ENCODE measurements at regions of chr2 and their contacts with region 1.

Region 1: GRCh38 chr2:85826990-85827878 is 61.6 kb downstream of the ST3GAL5 start:
- DNase-seq: peak; percentile 77
- ATAC-seq: peak; percentile 99
- H3K4me3 Mint-ChIP-seq: peak overlapping the region; percentile 66
- H3K27ac Mint-ChIP-seq: peak overlapping the region; percentile 62
- H3K4me1 Mint-ChIP-seq: peaks cover 29% of the 10 kb centered on the region
- H3K27me3 Mint-ChIP-seq: peaks cover 2% of the 10 kb centered on the region
- CTCF ChIP-seq: peak; percentile 32

Region 2: DNA sequence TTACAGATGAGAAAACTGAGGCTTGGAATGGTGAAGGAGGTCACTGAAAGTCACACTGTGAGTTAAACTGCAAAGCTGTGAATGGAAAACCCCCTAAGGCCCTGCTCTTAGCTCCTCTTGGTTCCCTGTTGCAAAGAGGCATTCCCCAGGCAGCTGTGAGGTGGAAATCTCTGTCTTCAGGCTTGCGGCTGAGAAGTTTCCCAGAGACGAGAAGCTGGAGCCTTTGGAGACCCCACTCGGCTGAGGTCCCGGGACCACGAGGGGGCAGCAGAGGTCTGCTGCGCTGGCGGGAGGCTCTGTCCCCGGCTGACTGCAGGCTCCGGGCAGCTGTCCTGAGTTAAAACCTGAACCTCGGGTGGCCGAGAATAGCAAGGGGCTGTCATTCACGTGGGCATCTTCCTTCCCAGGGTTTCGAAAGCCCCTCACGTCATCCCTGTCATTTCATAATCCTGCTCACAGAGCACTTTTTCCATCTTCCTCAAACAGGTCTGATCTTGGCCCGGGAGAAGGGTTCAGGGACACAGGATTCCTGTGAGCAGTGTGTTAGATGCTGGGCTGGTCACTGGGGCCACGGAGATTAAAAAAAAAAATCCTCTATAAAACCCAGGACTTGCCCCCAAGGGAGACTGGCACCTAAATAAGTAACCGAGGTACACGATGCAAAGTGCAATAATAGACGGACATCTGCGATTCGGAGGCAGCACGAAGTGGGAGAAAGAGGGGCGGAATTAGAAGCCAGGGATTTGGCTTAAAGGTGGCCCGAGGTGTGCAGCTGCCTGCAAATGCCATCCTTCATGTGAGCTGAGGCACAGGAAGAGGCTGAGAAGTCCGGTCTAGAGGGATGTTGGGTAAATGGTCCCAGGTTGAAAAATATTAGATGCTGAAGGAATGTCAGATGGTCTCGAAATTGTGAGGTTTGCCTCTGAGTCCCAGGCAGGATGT is 98.1 kb before region 1 on chr2:
- CTCF ChIA-PET with region 1: interaction called, 11 read pairs
- POLR2A ChIA-PET with region 1: interaction called, 3 read pairs
- intact Hi-C with region 1: no loop called
- DNase-seq: peak; percentile 76
- ATAC-seq: peak; percentile 94
- H3K4me3 Mint-ChIP-seq: no peak overlapping the region
- H3K27ac Mint-ChIP-seq: peak overlapping the region; percentile 41
- H3K4me1 Mint-ChIP-seq: peaks cover 2% of the 10 kb centered on the region
- H3K27me3 Mint-ChIP-seq: peaks cover 18% of the 10 kb centered on the region
- CTCF ChIP-seq: peak; percentile 32

Region 3: GRCh38 chr2:85852937-85853498 is 25.8 kb after region 1 on chr2:
- CTCF ChIA-PET with region 1: interaction called, 65 read pairs
- POLR2A ChIA-PET with region 1: interaction called, 8 read pairs
- intact Hi-C with region 1: loop called (anchors 2 kb)
- DNase-seq: peak; percentile 29
- ATAC-seq: peak; percentile 76
- H3K4me3 Mint-ChIP-seq: peak overlapping the region; percentile 79
- H3K27ac Mint-ChIP-seq: peak overlapping the region; percentile 99
- H3K4me1 Mint-ChIP-seq: peaks cover 79% of the 10 kb centered on the region
- H3K27me3 Mint-ChIP-seq: no peaks in the 10 kb centered on the region
- CTCF ChIP-seq: no peak

Region 4: DNA sequence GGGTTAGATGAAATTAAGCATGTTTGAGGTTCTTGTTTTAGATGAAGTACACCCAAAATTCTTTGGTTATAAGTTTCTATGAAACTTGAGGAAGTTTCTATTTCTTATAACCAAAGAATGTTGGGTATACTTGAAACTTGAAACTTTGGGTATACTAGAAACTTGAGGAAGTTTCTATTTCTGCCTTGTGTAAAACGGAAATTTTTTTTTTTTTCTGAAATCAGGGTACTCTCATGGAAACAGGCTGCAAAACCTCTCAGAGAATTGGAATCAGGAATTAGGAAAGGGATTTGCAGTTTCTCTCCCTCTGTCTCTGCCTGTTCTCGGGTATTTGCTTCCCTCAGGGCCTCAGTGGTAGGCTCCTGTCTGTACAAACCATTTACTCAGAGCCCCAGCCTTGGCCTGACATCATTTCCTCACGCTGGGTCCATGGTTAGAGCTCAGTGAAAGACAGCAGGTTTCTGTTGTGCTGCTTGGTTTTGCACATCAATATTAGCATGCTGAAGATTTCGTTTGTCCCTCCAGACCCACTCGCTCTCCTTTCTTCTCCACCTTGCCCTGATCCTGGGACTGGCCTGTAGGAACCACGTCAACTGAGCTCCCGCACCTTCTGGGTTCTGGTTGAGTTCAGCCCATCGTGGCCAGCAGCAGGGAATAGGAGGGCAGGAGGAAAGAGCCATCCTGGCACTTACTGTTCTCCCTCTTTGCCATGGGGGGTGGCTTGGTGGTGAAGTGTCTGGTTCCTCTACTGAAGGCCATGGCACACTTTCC is 172.0 kb after region 1 on chr2:
- CTCF ChIA-PET with region 1: interaction called, 10 read pairs
- POLR2A ChIA-PET with region 1: no interaction called
- intact Hi-C with region 1: no loop called
- DNase-seq: no peak
- ATAC-seq: peak; percentile 73
- H3K4me3 Mint-ChIP-seq: peak overlapping the region; percentile 66
- H3K27ac Mint-ChIP-seq: peak overlapping the region; percentile 96
- H3K4me1 Mint-ChIP-seq: peaks cover 76% of the 10 kb centered on the region
- H3K27me3 Mint-ChIP-seq: no peaks in the 10 kb centered on the region
- CTCF ChIP-seq: no peak

Region 5: DNA sequence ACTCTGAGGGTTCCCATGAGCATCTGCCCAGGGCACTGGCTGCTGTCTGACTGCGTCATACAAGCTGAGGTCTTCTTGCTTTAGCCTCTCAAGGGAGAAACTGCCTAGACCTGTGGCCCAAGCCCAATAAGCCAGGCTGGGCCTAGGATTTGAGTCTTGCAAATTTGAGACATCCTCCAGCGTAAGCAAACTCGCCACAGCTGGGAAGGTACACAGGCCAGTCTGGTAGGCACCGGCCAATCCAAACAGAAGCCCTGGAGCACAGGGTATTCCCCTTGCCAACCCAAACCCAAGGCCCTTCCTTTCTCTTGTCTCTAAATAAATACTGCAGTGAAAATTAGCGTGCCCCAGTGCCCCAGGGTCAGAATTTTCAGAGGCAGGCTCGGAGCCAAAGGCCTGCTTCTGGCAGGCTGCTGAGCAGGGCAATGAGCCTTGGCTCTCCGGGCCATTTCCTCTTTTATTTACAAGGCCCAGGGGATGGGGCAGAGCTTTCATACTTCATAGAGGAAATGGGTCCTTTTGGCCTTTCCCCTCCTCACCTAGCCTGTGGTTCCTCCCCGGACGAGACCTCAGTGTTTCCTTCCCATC is 245.1 kb after region 1 on chr2:
- CTCF ChIA-PET with region 1: interaction called, 236 read pairs
- POLR2A ChIA-PET with region 1: interaction called, 36 read pairs
- intact Hi-C with region 1: no loop called
- DNase-seq: peak; percentile 38
- ATAC-seq: peak; percentile 93
- H3K4me3 Mint-ChIP-seq: peak overlapping the region; percentile 28
- H3K27ac Mint-ChIP-seq: peak overlapping the region; percentile 91
- H3K4me1 Mint-ChIP-seq: peaks cover 34% of the 10 kb centered on the region
- H3K27me3 Mint-ChIP-seq: no peaks in the 10 kb centered on the region
- CTCF ChIP-seq: no peak

Region 6: GRCh38 chr2:86079981-86080911 is 253.0 kb after region 1 on chr2:
- CTCF ChIA-PET with region 1: interaction called, 236 read pairs
- POLR2A ChIA-PET with region 1: interaction called, 36 read pairs
- intact Hi-C with region 1: loop called (anchors 1 kb)
- DNase-seq: peak; percentile 62
- ATAC-seq: peak; percentile 78
- H3K4me3 Mint-ChIP-seq: peak overlapping the region; percentile 28
- H3K27ac Mint-ChIP-seq: peak overlapping the region; percentile 86
- H3K4me1 Mint-ChIP-seq: peaks cover 35% of the 10 kb centered on the region
- H3K27me3 Mint-ChIP-seq: no peaks in the 10 kb centered on the region
- CTCF ChIP-seq: peak; percentile 40

Region 7: GRCh38 chr2:86195055-86195807 is 368.0 kb after region 1 on chr2 and contains the start of gene IMMT:
- CTCF ChIA-PET with region 1: no interaction called
- POLR2A ChIA-PET with region 1: no interaction called
- intact Hi-C with region 1: loop called (anchors 5 kb)
- DNase-seq: peak; percentile 86
- ATAC-seq: peak; percentile 91
- H3K4me3 Mint-ChIP-seq: peak within 1 kb of the TSS; percentile 91
- H3K27ac Mint-ChIP-seq: peak within 1 kb of the TSS; percentile 90
- H3K4me1 Mint-ChIP-seq: peaks cover 59% of the 10 kb centered on the region
- H3K27me3 Mint-ChIP-seq: no peaks in the 10 kb centered on the region
- CTCF ChIP-seq: no peak
- total RNA-seq, gene IMMT: 90.3 and 93.0 TPM in 2 replicates